ENCODE measurements at regions of chr18 and their contacts with region 1.

Region 1: DNA sequence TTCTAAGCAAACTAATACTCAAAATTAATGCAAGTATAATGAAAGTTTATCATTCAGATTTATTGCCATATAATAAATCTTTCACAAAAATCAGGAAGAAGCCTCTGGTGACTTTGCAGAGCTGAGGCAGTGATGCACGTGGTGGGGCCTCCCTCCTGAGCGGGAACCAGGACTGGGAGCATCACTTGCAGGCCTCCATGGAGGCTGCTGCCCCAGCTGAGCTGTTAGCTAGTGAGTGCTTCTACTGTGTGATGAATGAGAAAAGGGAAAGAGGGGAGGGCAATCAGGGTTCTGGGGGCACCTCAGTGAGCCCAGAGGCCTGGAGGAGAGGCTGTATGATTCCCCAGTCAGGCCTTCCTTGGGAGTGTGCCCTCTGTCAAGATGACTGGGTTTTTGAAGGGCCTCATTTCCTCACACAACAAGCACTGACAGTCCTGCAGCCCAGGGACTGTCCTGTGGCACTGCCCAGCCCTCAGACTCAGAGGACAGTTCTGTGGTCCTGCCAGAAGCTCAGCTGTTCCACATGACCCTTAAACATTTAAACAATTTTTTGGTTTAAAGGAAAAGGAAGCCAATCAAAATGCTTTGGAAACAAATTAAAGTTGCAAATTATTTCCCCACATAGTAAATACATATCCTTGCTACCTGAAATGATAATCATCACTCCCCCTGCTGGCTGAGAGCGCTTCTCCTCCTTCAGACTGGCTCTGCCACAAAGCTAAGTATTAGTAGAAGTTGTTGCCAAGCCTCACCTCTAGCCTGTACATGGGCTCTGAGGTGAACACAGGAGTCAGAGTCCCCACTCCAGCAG is 90.9 kb upstream of the SMAD7 start:
- H3K4me3 ChIP-seq: no peak overlapping the region
- H3K27ac ChIP-seq: 0 out of 2 replicates have a peak overlapping the region, but pooled peaks have one; percentile 5
- H3K4me1 ChIP-seq: no peaks in the 10 kb centered on the region
- CTCF ChIP-seq: no peak; the same call in 1 of the 2 replicates

Region 2: DNA sequence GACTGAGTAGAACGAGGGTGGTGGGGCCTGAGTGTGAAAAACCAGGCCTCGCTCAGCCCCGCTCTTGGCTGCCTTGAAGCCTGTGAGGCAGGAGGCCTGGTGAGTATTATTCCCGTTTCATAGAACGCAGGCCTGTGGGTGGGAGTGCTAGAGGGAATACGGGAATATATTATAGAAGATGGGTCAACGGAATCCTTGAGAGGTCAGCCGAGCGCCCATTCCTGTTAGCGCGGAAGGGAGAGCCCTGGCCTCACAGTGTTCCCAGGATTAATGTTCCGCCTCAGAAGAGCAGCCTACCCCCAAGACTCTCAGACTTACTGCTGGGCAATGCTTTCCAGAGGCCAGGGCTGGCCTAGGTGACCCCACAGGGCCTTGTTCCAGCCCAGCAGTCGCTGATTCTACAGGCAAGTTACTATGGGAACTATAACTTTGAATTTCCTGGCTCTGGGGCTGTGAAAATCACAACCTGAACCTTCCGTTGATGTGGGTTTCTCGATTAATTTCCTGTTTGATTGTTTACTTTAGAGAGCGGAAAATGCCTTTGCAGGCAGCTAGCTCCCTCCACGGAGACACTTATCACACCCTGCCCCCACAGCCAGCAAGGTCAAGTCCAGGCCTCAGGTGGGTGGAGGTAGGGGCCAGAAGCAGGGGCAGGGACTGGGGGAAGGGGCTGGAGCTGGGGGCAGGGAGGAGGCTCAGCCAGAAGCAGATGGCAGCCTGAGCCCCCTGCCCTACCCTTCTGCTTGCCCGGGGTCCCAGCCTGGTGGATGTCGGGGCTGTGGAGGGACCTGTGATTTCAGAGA is 199.2 kb before region 1 on chr18:
- CTCF ChIA-PET with region 1: no interaction called
- POLR2A ChIA-PET with region 1: no interaction called
- H3K4me3 ChIP-seq: no peak overlapping the region
- H3K27ac ChIP-seq: peak overlapping the region; percentile 41; the same call in 1 of the 2 replicates
- H3K4me1 ChIP-seq: peaks cover 22% of the 10 kb centered on the region
- CTCF ChIP-seq: no peak

Region 3: DNA sequence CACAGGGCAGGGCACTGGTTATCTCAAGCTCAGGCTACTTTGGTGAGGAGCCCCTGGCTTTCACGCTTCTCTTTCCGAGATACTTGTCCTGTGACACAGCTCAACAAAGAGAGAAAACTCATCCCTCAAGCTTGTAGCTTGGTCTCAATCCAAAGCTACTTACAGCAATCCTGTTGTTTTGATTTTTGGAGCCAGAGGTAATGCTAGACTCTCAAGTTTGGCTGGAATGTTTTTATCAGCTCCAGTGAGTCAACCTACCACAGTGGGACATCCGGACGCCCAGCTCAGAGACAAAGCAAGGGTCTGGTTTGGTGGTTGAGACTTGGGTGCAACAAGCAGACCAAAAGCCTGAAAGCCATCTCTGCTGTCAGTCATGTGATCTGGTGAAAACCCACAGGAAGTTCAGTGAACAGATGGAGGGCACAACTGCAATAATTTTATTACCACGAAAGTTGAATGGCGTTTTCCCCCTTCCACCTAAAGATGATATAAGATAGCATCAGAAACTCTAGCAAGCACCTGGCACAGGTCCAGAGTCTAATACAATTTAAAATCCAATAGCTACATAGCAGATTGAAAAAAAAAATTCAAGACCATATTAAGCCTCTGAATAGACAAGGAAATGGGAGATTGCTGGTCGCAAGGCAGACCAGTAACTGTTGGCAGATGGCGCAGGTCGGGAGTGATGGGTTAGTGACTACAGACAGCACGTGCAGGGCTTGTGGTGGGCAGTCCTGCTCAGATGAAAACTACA is 11.4 kb after region 1 on chr18:
- CTCF ChIA-PET with region 1: interaction called, 28 read pairs
- POLR2A ChIA-PET with region 1: interaction called, 4 read pairs
- H3K4me3 ChIP-seq: no peak overlapping the region
- H3K27ac ChIP-seq: no peak overlapping the region
- H3K4me1 ChIP-seq: peaks cover 7% of the 10 kb centered on the region
- CTCF ChIP-seq: no peak

Region 4: GRCh38 chr18:49178736-49179135 is 137.1 kb after region 1 on chr18:
- CTCF ChIA-PET with region 1: interaction called, 17 read pairs
- POLR2A ChIA-PET with region 1: no interaction called
- H3K4me3 ChIP-seq: no peak overlapping the region
- H3K27ac ChIP-seq: no peak overlapping the region
- H3K4me1 ChIP-seq: peaks cover 9% of the 10 kb centered on the region
- CTCF ChIP-seq: peak; percentile 20; the same call in 1 of the 2 replicates

Measured in HEK293 (cell line).